ENCODE measurements at regions of chr10 and their contacts with region 1.

Region 1: DNA sequence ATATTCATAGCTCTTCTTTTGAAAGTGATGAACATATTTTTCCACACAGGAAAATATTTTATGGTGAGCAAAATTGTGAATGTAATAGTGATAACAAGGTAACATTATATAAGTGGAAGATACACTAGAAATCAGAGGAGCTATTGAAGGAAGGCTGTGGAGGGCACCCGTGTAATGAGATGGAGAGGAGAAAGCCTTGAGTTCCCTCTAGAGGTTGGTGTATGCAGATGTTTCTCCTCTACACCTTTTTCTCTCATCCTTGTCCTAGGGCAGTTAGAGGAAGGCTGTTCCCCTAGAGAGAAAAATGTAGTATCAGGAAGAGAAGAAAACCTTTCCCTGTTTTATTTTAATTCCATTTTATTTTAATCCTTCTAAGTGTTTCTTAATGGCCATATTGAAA is 54.6 kb upstream of the NRG3 start:
- DNase-seq: peak in 5 of 9 donors; percentile 2 to 35 (median 17)
- ATAC-seq: no peak
- H3K4me3 ChIP-seq: no peak overlapping the region
- H3K4me3 Mint-ChIP-seq: no peak overlapping the region
- H3K27ac ChIP-seq: no peak overlapping the region
- H3K27ac Mint-ChIP-seq: no peak overlapping the region
- H3K4me1 ChIP-seq: no peaks in the 10 kb centered on the region
- H3K4me1 Mint-ChIP-seq: no peaks in the 10 kb centered on the region
- H3K27me3 ChIP-seq: no peaks in the 10 kb centered on the region
- H3K27me3 Mint-ChIP-seq: no peaks in the 10 kb centered on the region

Region 2: GRCh38 chr10:81414038-81414437 is 406.4 kb before region 1 on chr10:
- CTCF ChIA-PET with region 1: no interaction called
- POLR2A ChIA-PET with region 1: no interaction called
- intact Hi-C with region 1: loop called in 1 of 2 experiments (anchors 5 kb)
- DNase-seq: no peak
- ATAC-seq: no peak
- H3K4me3 ChIP-seq: no peak overlapping the region
- H3K4me3 Mint-ChIP-seq: no peak overlapping the region
- H3K27ac ChIP-seq: no peak overlapping the region
- H3K27ac Mint-ChIP-seq: no peak overlapping the region
- H3K4me1 ChIP-seq: no peaks in the 10 kb centered on the region
- H3K4me1 Mint-ChIP-seq: no peaks in the 10 kb centered on the region
- H3K27me3 ChIP-seq: no peaks in the 10 kb centered on the region
- H3K27me3 Mint-ChIP-seq: no peaks in the 10 kb centered on the region

Region 3: GRCh38 chr10:81680374-81680773 is 140.0 kb before region 1 on chr10:
- CTCF ChIA-PET with region 1: interaction called, 3 read pairs
- POLR2A ChIA-PET with region 1: no interaction called
- intact Hi-C with region 1: loop called in 1 of 2 experiments (anchors 1 kb)
- DNase-seq: no peak
- ATAC-seq: no peak
- H3K4me3 ChIP-seq: no peak overlapping the region
- H3K4me3 Mint-ChIP-seq: no peak overlapping the region
- H3K27ac ChIP-seq: no peak overlapping the region
- H3K27ac Mint-ChIP-seq: no peak overlapping the region
- H3K4me1 ChIP-seq: no peaks in the 10 kb centered on the region
- H3K4me1 Mint-ChIP-seq: peaks cover 0 to 7% (median 3%) of the 10 kb centered on the region in 7 donors
- H3K27me3 ChIP-seq: no peaks in the 10 kb centered on the region
- H3K27me3 Mint-ChIP-seq: no peaks in the 10 kb centered on the region

Measured in naive thymus-derived CD4-positive, alpha-beta T cell (primary cell).